AG04450 (cell line): ENCODE measurements at regions of chr18 and their contacts with region 1.

Region 1: GRCh38 chr18:51029694-51030536 is at the start of gene SMAD4:
- DNase-seq: peak; percentile 91
- H3K4me3 ChIP-seq: peak within 1 kb of the TSS; percentile 78
- H3K27ac ChIP-seq: peak within 1 kb of the TSS; percentile 94
- H3K27me3 ChIP-seq: no peaks in the 10 kb centered on the region
- CTCF ChIP-seq: no peak
- polyA plus RNA-seq, gene SMAD4: 92.1 and 139 TPM in 2 replicates

Region 2: GRCh38 chr18:50878345-50879301 is 151.3 kb before region 1 on chr18 and contains the start of gene ME2:
- CTCF ChIA-PET with region 1: interaction called, 8 read pairs
- POLR2A ChIA-PET with region 1: interaction called, 13 read pairs
- DNase-seq: peak; percentile 73
- H3K4me3 ChIP-seq: peak within 1 kb of the TSS; percentile 93
- H3K27ac ChIP-seq: peak within 1 kb of the TSS; percentile 86
- H3K27me3 ChIP-seq: peaks cover 2% of the 10 kb centered on the region
- CTCF ChIP-seq: no peak
- polyA plus RNA-seq, gene ME2: 38.6 and 51.3 TPM in 2 replicates

Region 3: GRCh38 chr18:50967714-50968661 is 61.9 kb before region 1 on chr18 and contains the start of gene ELAC1:
- CTCF ChIA-PET with region 1: no interaction called
- POLR2A ChIA-PET with region 1: interaction called, 10 read pairs
- DNase-seq: peak; percentile 36
- H3K4me3 ChIP-seq: peak within 1 kb of the TSS; percentile 86
- H3K27ac ChIP-seq: peak within 1 kb of the TSS; percentile 95
- H3K27me3 ChIP-seq: no peaks in the 10 kb centered on the region
- CTCF ChIP-seq: no peak
- polyA plus RNA-seq, gene ELAC1: 5.9 and 9.1 TPM in 2 replicates

Region 4: GRCh38 chr18:51290860-51291259 is 260.9 kb after region 1 on chr18:
- CTCF ChIA-PET with region 1: no interaction called
- POLR2A ChIA-PET with region 1: no interaction called
- DNase-seq: no peak
- H3K4me3 ChIP-seq: no peak overlapping the region
- H3K27ac ChIP-seq: no peak overlapping the region
- H3K27me3 ChIP-seq: no peaks in the 10 kb centered on the region
- CTCF ChIP-seq: no peak